Activated B cell treated with CpG ODN at 0.5 μM for 24 hours (primary cell): ENCODE measurements at regions of chr11 and their contacts with region 1.

Region 1: DNA sequence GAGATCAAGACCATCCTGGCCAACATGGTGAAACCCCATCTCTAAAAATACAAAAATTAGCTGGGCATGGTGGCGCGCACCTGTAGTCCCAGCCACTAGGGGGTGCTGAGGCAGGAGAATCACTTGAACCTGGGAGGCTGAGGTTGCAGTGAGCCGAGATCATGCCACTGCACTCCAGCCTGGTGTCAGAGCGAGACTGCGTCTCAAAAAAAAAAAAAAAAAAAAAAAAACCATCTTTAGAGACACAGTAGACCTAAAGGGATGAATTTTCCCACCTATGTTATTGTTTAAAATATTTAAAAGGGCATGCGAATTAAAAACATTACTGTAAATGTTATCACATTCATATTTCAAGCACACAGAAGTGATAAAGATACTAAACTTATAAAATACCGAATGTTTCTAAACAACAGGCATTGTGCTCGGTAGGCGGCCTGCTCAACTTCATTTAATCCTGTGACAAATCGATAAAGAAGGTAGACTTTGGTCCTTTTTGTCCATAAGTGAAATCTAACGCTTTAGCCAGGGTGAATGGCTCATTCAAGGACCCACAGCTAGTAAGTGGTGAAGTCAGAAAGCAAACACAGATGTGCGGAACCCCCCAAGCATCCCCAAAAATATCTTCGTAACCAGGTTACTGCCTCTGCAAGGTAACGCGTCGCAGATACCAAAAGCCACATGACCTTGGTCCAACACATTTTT is 16.1 kb downstream of the NCAPD3 start:
- DNase-seq: peak; percentile 40
- ATAC-seq: no peak
- H3K4me3 Mint-ChIP-seq: no peak overlapping the region
- H3K27ac Mint-ChIP-seq: no peak overlapping the region
- H3K4me1 Mint-ChIP-seq: no peaks in the 10 kb centered on the region
- H3K27me3 Mint-ChIP-seq: no peaks in the 10 kb centered on the region
- CTCF ChIP-seq: peak; percentile 39

Region 2: DNA sequence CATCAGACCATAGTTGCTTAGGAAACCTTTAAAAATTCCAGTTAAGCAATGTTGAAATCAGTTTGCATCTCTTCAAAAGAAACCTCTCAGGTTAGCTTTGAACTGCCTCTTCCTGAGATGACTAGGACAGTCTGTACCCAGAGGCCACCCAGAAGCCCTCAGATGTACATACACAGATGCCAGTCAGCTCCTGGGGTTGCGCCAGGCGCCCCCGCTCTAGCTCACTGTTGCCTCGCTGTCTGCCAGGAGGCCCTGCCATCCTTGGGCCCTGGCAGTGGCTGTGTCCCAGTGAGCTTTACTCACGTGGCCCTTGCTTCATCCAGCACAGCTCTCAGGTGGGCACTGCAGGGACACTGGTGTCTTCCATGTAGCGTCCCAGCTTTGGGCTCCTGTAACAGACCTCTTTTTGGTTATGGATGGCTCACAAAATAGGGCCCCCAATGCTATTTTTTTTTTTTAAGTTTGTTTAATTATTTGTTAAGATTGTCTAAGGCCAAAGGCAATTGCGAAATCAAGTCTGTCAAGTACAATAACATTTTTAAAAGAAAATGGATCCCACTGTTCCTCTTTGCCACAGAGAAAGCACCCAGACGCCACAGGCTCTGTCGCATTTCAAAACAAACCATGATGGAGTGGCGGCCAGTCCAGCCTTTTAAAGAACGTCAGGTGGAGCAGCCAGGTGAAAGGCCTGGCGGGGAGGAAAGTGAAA is 57.3 kb before region 1 on chr11:
- CTCF ChIA-PET with region 1: no interaction called
- POLR2A ChIA-PET with region 1: no interaction called
- intact Hi-C with region 1: no loop called
- DNase-seq: no peak
- ATAC-seq: no peak
- H3K4me3 Mint-ChIP-seq: no peak overlapping the region
- H3K27ac Mint-ChIP-seq: no peak overlapping the region
- H3K4me1 Mint-ChIP-seq: peaks cover 7% of the 10 kb centered on the region
- H3K27me3 Mint-ChIP-seq: no peaks in the 10 kb centered on the region
- CTCF ChIP-seq: no peak

Region 3: DNA sequence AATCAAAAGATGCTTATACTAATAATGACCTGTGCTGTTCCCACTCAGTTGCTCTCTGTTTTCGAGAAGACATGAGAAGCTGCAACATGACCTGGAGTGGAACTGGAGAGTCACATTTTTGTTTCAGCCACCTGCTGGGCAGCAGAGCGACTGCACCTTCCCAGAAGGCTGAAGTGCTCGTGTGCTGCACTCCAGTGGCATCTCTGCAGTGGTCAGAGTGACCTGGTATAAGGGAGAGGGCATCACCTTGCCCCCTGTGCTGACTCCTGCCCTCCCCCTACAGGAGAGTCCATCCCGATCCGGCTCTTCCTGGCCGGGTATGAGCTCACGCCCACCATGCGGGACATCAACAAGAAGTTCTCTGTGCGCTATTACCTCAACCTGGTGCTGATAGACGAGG is 37.0 kb after region 1 on chr11:
- CTCF ChIA-PET with region 1: interaction called, 45 read pairs
- POLR2A ChIA-PET with region 1: interaction called, 3 read pairs
- intact Hi-C with region 1: loop called (anchors 1 kb)
- DNase-seq: no peak
- ATAC-seq: peak; percentile 84
- H3K4me3 Mint-ChIP-seq: no peak overlapping the region
- H3K27ac Mint-ChIP-seq: no peak overlapping the region
- H3K4me1 Mint-ChIP-seq: no peaks in the 10 kb centered on the region
- H3K27me3 Mint-ChIP-seq: no peaks in the 10 kb centered on the region
- CTCF ChIP-seq: no peak

Region 4: GRCh38 chr11:134691985-134692384 is 484.3 kb after region 1 on chr11:
- CTCF ChIA-PET with region 1: no interaction called
- POLR2A ChIA-PET with region 1: interaction called, 11 read pairs
- intact Hi-C with region 1: no loop called
- DNase-seq: no peak
- ATAC-seq: no peak
- H3K4me3 Mint-ChIP-seq: no peak overlapping the region
- H3K27ac Mint-ChIP-seq: no peak overlapping the region
- H3K4me1 Mint-ChIP-seq: no peaks in the 10 kb centered on the region
- H3K27me3 Mint-ChIP-seq: peaks cover 2% of the 10 kb centered on the region
- CTCF ChIP-seq: no peak